Activated T-helper 1 cell treated with anti-CD3 and anti-CD28 coated beads, Interleukin-12 subunit alpha, Interleukin-12 subunit beta, Interleukin-2, Interleukin-4 antibody, amounts not matched to agents 30 ng/mL and 10 ng/mL and 1 ng/mL, durations not matched to agents 14 hours and 24 hours and 36 hours (primary cell): ENCODE measurements at regions of chr10 and their contacts with region 1.

Region 1: GRCh38 chr10:119305860-119306513 is 98.6 kb downstream of the GRK5 start:
- DNase-seq: peak; percentile 82
- H3K4me3 Mint-ChIP-seq: peak overlapping the region; percentile 79
- H3K27ac Mint-ChIP-seq: peak overlapping the region; percentile 100
- H3K4me1 Mint-ChIP-seq: peaks cover 89% of the 10 kb centered on the region
- H3K27me3 Mint-ChIP-seq: peaks cover 4% of the 10 kb centered on the region

Region 2: GRCh38 chr10:119253433-119254174 is 52.4 kb before region 1 on chr10:
- intact Hi-C with region 1: loop called (anchors 1 kb)
- DNase-seq: no peak
- H3K4me3 Mint-ChIP-seq: peak overlapping the region; percentile 15
- H3K27ac Mint-ChIP-seq: peak overlapping the region; percentile 88
- H3K4me1 Mint-ChIP-seq: peaks cover 63% of the 10 kb centered on the region
- H3K27me3 Mint-ChIP-seq: no peaks in the 10 kb centered on the region

Region 3: DNA sequence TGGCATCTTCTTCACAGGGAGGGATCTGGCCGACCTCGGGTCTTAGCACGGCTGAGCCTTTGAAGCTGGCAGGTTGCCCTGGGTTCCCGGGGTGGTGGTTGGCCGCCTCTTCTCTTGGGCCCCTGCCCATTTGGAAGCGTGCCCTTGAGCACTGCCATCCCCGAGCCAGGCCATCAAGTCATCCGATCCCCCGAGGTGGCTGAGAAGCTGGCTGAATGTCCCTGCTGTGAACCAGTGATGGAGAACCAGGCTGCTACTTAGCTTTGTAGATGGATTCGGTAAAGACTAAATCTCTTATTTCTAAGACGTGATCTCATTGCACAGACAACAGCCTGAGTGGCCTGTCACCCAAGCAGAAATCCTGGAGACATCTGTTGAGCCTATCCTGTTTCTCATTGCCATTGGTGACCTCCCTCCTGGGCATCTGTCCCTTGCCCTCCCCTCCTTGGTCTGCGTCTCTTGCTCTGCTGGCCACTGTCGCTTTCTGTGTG is 24.4 kb before region 1 on chr10:
- intact Hi-C with region 1: loop called (anchors 1 kb)
- DNase-seq: no peak
- H3K4me3 Mint-ChIP-seq: no peak overlapping the region
- H3K27ac Mint-ChIP-seq: no peak overlapping the region
- H3K4me1 Mint-ChIP-seq: peaks cover 49% of the 10 kb centered on the region
- H3K27me3 Mint-ChIP-seq: no peaks in the 10 kb centered on the region

Region 4: GRCh38 chr10:119502209-119502608 is 196.2 kb after region 1 on chr10:
- intact Hi-C with region 1: loop called (anchors 5 kb)
- DNase-seq: peak; percentile 71
- H3K4me3 Mint-ChIP-seq: peak overlapping the region; percentile 70
- H3K27ac Mint-ChIP-seq: peak overlapping the region; percentile 94
- H3K4me1 Mint-ChIP-seq: peaks cover 90% of the 10 kb centered on the region
- H3K27me3 Mint-ChIP-seq: no peaks in the 10 kb centered on the region

Region 5: DNA sequence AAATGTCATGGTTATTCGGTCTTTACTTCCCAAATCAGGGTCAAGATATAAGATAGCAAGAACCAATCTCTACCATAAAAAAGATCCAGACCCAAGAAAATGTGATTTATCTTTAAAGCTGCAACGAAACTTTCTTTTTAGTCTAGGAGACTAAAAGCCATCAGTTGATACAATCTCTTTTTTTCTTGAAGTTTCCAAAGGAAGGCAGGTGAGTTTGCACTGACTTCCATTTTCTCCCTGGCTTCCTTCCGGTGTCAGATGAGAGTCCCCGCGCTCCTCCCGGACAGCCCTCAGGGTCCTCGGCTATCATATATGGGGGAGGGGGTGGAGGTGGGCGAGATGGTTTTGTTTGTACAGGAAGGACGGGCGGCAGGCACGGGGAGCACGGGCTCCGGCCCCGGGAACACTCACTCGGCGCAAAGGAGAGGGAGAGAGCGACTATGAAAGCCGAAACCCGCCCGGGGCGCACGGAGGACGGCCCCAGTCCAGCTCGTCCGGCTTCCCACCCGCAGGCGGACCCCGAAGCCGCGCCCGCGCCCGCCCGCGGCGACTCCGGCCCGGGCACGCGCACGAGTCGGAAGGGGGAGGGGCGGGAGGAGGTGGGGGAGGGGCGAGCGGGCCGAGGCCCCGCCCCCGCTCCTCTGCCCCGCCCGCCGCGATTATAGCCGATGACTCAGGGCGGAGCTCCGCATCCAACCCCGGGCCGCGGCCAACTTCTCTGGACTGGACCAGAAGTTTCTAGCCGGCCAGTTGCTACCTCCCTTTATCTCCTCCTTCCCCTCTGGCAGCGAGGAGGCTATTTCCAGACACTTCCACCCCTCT is 344.9 kb after region 1 on chr10 and contains the start of gene BAG3:
- intact Hi-C with region 1: loop called (anchors 10 kb)
- DNase-seq: peak; percentile 70
- H3K4me3 Mint-ChIP-seq: peak within 1 kb of the TSS; percentile 95
- H3K27ac Mint-ChIP-seq: peak within 1 kb of the TSS; percentile 96
- H3K4me1 Mint-ChIP-seq: peaks cover 50% of the 10 kb centered on the region
- H3K27me3 Mint-ChIP-seq: no peaks in the 10 kb centered on the region
- total RNA-seq, gene BAG3: 30.4 and 30.5 TPM in 2 replicates

Region 6: DNA sequence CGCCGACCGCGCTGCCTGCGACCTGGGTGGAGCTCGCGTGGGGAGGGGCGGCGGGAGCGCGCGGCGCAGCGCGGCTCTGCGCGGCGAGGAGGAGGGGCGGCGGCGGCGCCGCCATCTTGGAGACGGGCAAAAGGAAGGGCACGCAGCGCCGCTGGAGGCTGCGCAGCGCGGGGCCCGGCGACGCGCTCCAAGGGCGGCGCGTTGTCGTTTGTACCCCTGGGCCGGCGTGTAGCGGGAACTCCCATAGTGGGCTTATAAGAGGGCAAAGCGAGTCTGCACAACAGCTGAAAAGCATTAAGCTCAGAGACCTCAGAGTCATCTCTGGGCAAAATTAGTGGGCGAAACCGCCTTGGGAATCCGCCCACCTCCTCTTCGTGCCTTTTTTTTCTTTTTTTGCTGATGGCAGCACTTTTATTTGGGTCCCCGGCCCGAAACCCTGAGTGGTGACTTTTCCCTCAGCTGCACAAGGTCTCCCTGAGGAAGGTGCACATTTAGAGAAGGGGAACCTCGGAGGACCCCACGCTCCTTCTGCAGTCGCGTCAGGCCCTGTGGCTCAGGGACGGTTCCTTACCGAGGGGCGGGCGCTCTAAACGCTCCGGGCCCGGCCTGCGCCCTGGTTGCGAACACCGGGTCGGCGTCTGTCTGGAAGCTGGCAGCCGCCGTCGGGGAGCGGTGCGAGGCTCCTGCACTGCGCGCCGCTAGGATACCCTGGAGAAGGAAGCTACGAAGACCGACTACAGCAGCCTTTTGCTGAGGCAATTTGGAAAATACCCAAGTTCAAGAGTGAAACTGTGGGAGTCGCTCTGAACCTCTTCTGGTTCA is 567.1 kb after region 1 on chr10:
- intact Hi-C with region 1: loop called (anchors 10 kb)
- DNase-seq: peak; percentile 87
- H3K4me3 Mint-ChIP-seq: peak overlapping the region; percentile 84
- H3K27ac Mint-ChIP-seq: peak overlapping the region; percentile 80
- H3K4me1 Mint-ChIP-seq: peaks cover 34% of the 10 kb centered on the region
- H3K27me3 Mint-ChIP-seq: no peaks in the 10 kb centered on the region